ENCODE measurements at regions of chr15 and their contacts with region 1.

Region 1: DNA sequence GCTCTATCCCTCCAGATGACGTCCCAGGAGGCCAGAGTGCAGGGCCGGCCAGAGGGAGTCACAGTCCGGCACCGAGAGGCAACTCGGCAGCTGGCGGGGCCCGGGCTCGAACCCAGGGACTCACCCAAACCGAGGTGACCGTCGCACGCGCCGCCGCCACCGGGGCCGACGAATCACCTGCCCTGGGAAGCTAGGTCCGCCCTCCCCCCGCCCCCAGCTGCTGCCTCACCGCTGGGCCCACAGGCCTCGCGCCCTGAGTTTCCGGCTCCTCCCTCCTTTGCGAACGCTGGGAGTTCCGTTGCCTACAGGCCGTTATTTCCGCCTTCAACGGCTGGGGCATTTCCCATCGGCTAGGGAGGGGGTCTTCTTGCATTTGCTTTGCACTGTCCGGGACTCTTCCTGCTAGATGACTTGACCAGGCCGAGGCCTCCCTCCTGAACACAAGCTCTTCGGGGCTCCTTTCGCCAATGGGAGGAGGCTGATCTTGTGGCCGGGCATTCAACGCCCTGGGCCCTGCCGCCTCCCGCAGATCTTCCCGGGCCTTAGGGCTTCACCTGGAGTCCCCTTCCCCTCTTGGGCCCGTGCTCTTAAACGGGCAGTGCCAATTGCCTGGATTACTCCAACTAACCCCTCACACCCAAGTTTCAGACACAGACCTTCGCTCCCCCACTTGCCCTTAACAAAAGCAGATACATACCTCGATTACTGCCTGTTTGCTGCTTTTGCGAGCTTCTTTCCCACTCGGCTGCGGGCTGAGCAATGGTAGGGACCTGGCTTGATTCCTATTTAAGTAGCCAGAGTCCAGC is at the start of gene SNUPN:
- DNase-seq: peak; percentile 97
- ATAC-seq: peak; percentile 88
- H3K4me3 Mint-ChIP-seq: peak within 1 kb of the TSS; percentile 93
- H3K27ac Mint-ChIP-seq: peak within 1 kb of the TSS; percentile 99
- H3K4me1 Mint-ChIP-seq: peaks cover 45% of the 10 kb centered on the region
- H3K27me3 Mint-ChIP-seq: no peaks in the 10 kb centered on the region
- total RNA-seq, gene SNUPN: 37.4 to 40.3 TPM

Region 2: DNA sequence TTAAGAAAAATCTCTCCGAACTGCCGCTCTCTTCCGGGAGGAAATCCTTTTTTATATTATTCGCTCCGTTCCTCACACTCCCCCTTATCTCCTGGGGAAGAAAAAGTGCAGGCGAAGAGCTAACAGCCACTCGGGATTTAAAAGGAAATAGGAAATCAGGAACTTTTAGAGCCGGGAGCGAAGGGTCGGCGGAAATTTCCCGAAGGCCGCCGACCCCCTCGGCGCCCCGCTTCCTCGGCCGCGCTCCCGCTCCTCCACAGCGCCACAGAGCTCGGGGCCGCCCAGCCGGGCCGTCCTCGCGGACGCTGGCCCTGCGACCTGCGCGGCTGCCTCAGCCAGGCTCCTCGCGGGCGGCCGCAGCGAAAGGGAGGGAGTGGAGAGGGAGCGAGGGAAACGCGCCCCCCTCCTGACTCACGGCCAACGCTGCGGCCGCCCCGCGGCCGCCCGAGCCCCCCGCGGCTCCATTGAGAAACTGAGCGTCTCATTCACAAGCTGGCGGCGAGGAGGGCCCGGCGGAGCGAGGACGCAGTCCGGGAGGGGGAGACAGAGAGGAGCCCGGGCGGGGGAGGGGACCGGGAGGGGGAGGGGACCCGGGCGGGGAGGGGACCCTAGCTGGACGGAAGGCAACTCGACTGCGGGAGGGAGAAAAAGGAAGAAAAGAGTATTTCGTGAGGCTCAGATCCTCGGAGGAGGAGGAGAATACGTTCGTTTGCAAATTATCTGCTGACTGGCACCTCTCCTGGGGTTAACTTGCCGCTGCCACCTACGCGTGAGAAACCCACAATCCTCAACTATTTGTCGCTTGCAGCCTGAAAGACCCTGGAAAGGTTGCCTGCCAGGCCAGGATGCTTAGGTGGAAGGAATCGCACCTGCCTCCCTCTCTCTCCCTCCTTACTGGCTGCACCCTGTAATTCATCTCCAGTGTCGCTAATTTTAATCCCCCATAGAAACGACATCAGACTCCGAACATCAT is 46.5 kb before region 1 on chr15 and contains the start of gene PTPN9:
- CTCF ChIA-PET with region 1: no interaction called
- POLR2A ChIA-PET with region 1: interaction called, 6 read pairs
- intact Hi-C with region 1: loop called in 1 of 2 experiments (anchors 1 kb)
- DNase-seq: peak; percentile 88
- ATAC-seq: peak; percentile 80
- H3K4me3 Mint-ChIP-seq: peak within 1 kb of the TSS; percentile 87
- H3K27ac Mint-ChIP-seq: peak within 1 kb of the TSS; percentile 94
- H3K4me1 Mint-ChIP-seq: peaks cover 13% of the 10 kb centered on the region
- H3K27me3 Mint-ChIP-seq: no peaks in the 10 kb centered on the region
- total RNA-seq, gene PTPN9: 15.0 to 16.5 TPM

Region 3: DNA sequence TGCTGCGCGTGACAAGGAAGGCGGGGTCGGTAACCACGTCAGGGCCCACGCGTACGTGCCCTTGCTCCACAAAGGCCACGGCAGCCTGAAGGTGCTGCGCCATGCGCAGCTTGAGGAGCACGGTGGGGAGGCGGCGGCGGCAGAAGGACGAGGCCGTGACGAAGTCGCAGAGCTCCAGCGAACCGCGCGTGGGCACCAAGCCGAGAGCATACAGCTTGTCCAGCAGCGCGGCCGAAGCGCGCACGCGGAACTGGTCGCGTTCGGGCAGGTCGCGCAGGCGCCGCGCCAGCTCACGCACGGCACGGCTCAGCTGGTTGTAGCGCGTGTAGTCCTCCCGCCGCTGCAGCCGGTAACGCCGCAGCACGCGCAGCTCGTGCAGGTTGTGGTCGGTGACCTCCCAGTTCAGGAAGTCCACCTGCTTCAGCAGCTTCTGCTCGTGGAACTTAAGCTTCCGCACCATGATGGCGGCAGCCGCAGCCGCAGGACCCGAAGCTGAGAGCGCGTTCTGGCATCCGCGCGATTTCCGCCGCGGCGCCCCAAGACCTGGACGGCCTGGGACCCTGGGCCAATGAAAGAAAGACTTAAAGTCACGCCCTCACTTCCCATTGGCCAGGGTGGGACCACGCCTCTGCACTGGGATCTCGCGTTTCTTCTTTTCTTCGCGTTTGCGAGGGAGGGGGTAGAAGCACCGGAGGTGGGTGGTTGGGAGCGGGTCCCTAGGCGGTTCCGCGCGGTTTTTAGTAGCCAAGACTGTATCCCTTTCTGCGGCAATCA is 14.2 kb after region 1 on chr15 and contains the start of gene IMP3:
- CTCF ChIA-PET with region 1: interaction called, 21 read pairs
- POLR2A ChIA-PET with region 1: interaction called, 18 read pairs
- intact Hi-C with region 1: loop called (anchors 1 kb)
- DNase-seq: peak; percentile 96
- ATAC-seq: peak; percentile 92
- H3K4me3 Mint-ChIP-seq: peak within 1 kb of the TSS; percentile 99
- H3K27ac Mint-ChIP-seq: peak within 1 kb of the TSS; percentile 96
- H3K4me1 Mint-ChIP-seq: peaks cover 25% of the 10 kb centered on the region
- H3K27me3 Mint-ChIP-seq: no peaks in the 10 kb centered on the region
- total RNA-seq, gene IMP3: 80.3 to 87.5 TPM

Region 4: GRCh38 chr15:75842722-75843551 is 217.2 kb after region 1 on chr15 and contains the start of gene UBE2Q2:
- CTCF ChIA-PET with region 1: no interaction called
- POLR2A ChIA-PET with region 1: no interaction called
- intact Hi-C with region 1: loop called in 1 of 2 experiments (anchors 5 kb)
- DNase-seq: peak; percentile 85
- ATAC-seq: peak; percentile 63
- H3K4me3 Mint-ChIP-seq: peak within 1 kb of the TSS; percentile 90
- H3K27ac Mint-ChIP-seq: peak within 1 kb of the TSS; percentile 83
- H3K4me1 Mint-ChIP-seq: peaks cover 34% of the 10 kb centered on the region
- H3K27me3 Mint-ChIP-seq: peaks cover 9% of the 10 kb centered on the region
- total RNA-seq, gene UBE2Q2: 14.9 to 15.1 TPM